CD14-positive monocyte (primary cell): ENCODE measurements at regions of chrX and their contacts with region 1.

Region 1: DNA sequence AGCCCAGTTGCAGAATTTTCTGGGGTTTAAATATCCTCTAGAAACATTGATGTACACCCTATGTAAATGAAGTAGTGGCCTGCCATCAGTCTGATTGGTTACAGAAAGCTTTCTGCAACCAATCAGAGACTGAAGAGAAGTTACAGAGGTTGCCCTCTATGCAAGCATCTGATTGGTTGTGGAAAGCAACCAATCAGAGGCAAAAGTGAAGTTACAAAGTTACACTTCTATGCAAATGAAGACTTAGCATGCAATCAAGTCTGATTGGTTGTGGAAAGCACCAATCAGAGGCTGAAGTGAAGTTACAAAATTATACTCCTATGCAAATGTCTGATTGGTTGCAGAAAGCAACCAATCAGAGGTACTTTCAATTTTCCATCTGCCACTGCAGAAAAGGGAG is 51.9 kb upstream of the USP9X start:
- DNase-seq: peak in 1 of 3 donors; percentile 4
- H3K4me3 ChIP-seq: no peak overlapping the region
- H3K4me3 Mint-ChIP-seq: no peak overlapping the region
- H3K27ac ChIP-seq: no peak overlapping the region
- H3K27ac Mint-ChIP-seq: no peak overlapping the region
- H3K4me1 ChIP-seq: no peaks in the 10 kb centered on the region
- H3K4me1 Mint-ChIP-seq: no peaks in the 10 kb centered on the region
- H3K27me3 ChIP-seq: no peaks in the 10 kb centered on the region
- H3K27me3 Mint-ChIP-seq: peaks cover 0 to 5% (median 0%) of the 10 kb centered on the region in 3 donors
- CTCF ChIP-seq: no peak

Region 2: DNA sequence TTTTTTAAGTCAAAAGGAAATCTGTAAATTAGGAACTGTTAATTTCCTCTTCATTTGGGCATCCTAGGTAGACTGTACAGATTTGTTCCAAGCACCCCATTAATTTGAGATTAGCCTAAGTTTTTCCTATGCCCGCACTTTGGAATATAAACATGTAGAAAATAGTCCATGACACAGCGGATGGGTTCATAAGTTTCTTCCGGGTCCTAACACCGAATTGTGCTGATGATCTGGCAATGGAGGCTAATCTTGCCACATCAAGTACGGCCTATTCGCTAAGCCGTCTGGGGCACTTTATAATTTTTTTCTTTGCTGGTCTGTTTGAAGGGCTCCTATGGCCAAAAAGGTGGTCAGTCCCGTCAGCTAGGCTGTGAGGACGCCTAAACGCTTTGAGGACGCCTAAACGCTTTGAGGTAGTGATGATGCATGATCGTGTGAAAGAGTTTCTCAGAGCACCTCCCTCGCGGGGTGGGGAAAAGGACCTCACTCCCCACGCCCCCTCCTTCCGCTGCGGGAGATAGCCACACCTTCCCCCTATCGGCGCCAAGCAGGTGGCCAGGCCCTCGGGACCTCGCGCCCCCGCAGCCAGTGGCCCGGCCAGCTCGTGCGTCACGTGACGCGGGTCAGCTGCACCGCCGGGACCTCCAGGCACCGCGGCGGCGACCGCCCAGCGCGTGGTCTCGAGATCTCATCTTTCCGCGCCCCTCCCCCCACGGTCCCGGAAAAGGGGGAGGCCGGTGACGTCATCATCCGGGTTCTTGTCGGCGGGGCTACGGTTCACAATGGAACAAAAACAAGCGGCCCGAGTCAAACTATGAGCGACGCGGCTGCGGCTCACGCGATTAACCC is 51.0 kb after region 1 on chrX:
- intact Hi-C with region 1: loop called in 1 of 2 experiments (anchors 10 kb)
- DNase-seq: peak; percentile 88 to 96 (median 96)
- H3K4me3 ChIP-seq: peak overlapping the region; percentile 66 to 87 (median 85)
- H3K4me3 Mint-ChIP-seq: peak overlapping the region; percentile 82 to 88
- H3K27ac ChIP-seq: peak overlapping the region; percentile 96 to 100
- H3K27ac Mint-ChIP-seq: peak overlapping the region; percentile 97 to 99 (median 98)
- H3K4me1 ChIP-seq: peaks cover 22 to 40% of the 10 kb centered on the region in 2 donors
- H3K4me1 Mint-ChIP-seq: peaks cover 32% of the 10 kb centered on the region
- H3K27me3 ChIP-seq: peaks cover 0 to 23% of the 10 kb centered on the region in 2 donors
- H3K27me3 Mint-ChIP-seq: peaks cover 0 to 61% (median 1%) of the 10 kb centered on the region in 3 donors
- CTCF ChIP-seq: no peak